ENCODE measurements at regions of chr10 and their contacts with region 1.

Region 1: DNA sequence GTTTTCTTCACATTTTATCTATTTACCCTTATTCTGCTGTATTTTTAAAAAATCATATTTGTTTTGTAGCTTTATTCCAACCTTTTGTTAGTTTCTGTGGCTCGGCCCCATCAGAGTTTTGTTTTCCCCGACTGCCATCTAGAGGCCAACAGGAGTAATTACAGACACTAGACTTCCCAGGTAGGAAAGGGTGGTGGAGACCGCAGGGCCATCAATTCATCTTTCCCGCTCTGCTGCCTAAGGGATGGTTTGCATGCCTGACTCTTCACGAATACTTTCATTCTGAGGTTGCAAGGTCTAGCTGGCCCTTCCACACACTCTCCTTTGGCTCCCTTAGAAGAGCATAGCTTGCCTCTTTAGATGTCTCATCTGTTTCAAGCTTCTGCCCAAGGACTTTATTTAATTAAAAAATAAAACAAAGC is 38.3 kb downstream of the LYZL2 start:
- DNase-seq: peak in 7 of 9 donors; percentile 23 to 61 (median 48)
- ATAC-seq: peak; percentile 80
- H3K4me3 ChIP-seq: no peak overlapping the region
- H3K4me3 Mint-ChIP-seq: no peak overlapping the region
- H3K27ac ChIP-seq: no peak overlapping the region
- H3K27ac Mint-ChIP-seq: no peak overlapping the region
- H3K4me1 ChIP-seq: no peaks in the 10 kb centered on the region
- H3K4me1 Mint-ChIP-seq: peaks cover 0 to 3% (median 0%) of the 10 kb centered on the region in 7 donors
- H3K27me3 ChIP-seq: no peaks in the 10 kb centered on the region
- H3K27me3 Mint-ChIP-seq: peaks cover 0 to 26% (median 13%) of the 10 kb centered on the region in 5 donors

Region 2: GRCh38 chr10:29386342-29386999 is 1204.8 kb before region 1 on chr10:
- CTCF ChIA-PET with region 1: interaction called, 7 read pairs
- POLR2A ChIA-PET with region 1: no interaction called
- intact Hi-C with region 1: loop called in 1 of 2 experiments (anchors 10 kb)
- DNase-seq: peak in 6 of 9 donors; percentile 5 to 40 (median 35)
- ATAC-seq: peak; percentile 67
- H3K4me3 ChIP-seq: no peak overlapping the region
- H3K4me3 Mint-ChIP-seq: no peak overlapping the region
- H3K27ac ChIP-seq: no peak overlapping the region
- H3K27ac Mint-ChIP-seq: no peak overlapping the region
- H3K4me1 ChIP-seq: no peaks in the 10 kb centered on the region
- H3K4me1 Mint-ChIP-seq: peaks cover 0 to 6% (median 0%) of the 10 kb centered on the region in 7 donors
- H3K27me3 ChIP-seq: peaks cover 0 to 3% of the 10 kb centered on the region in 2 donors
- H3K27me3 Mint-ChIP-seq: peaks cover 0 to 13% (median 5%) of the 10 kb centered on the region in 5 donors

Region 3: DNA sequence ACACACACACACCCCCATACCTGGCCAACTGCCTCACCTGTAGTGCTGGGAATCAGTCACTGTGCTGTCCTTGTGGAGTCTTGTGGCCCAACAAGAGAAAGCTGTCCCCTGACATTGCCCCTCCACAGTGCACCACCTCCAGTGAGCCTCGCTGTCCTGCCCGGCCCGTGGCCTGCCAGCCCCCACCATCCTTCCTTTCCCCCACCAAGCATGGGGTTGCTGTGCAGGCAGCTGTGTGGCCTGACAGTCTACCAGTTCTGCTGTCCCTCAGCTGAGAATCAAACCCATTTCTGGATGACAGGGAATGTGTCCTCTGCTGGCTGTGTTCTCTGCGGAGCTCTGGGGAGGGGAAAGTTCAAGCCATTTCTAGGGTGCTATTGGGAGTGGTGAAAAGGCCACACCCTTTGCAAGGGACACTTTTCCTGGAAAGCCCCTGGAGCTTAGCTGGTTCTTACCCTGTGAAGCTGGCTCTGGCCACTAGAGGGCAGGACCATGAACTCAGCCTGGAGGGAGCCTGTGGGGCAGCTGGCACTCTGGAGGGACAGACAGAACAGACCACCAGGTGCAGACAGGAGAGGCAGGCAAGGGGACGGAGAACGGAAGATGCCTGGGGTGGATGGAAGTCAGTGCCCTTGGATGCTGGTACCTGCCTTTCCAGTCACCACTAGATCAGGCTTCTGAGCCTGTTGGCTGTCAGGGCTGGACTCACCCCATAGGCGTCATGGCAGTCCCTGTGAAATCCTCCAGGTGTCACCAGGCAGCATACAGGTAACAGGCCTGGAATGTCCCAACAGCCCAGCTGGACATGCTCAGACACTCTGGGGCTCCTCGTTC is 231.7 kb before region 1 on chr10:
- CTCF ChIA-PET with region 1: interaction called, 6 read pairs
- POLR2A ChIA-PET with region 1: no interaction called
- intact Hi-C with region 1: loop called (anchors 1 kb)
- DNase-seq: peak; percentile 15 to 68 (median 34)
- ATAC-seq: peak; percentile 90
- H3K4me3 ChIP-seq: no peak overlapping the region
- H3K4me3 Mint-ChIP-seq: no peak overlapping the region
- H3K27ac ChIP-seq: no peak overlapping the region
- H3K27ac Mint-ChIP-seq: peak overlapping the region in 1 of 9 donors; percentile 15
- H3K4me1 ChIP-seq: no peaks in the 10 kb centered on the region
- H3K4me1 Mint-ChIP-seq: peaks cover 0 to 6% (median 4%) of the 10 kb centered on the region in 7 donors
- H3K27me3 ChIP-seq: no peaks in the 10 kb centered on the region
- H3K27me3 Mint-ChIP-seq: peaks cover 0 to 20% (median 4%) of the 10 kb centered on the region in 5 donors

Region 4: GRCh38 chr10:30392564-30392990 is 198.7 kb before region 1 on chr10:
- CTCF ChIA-PET with region 1: interaction called, 83 read pairs
- POLR2A ChIA-PET with region 1: interaction called, 4 read pairs
- intact Hi-C with region 1: loop called (anchors 1 kb)
- DNase-seq: peak; percentile 45 to 80 (median 66)
- ATAC-seq: peak; percentile 99
- H3K4me3 ChIP-seq: no peak overlapping the region
- H3K4me3 Mint-ChIP-seq: peak overlapping the region in 2 of 10 donors; percentile 18 to 57
- H3K27ac ChIP-seq: no peak overlapping the region
- H3K27ac Mint-ChIP-seq: peak overlapping the region in 1 of 9 donors; percentile 47
- H3K4me1 ChIP-seq: peaks cover 0 to 5% of the 10 kb centered on the region in 2 donors
- H3K4me1 Mint-ChIP-seq: peaks cover 0 to 4% (median 3%) of the 10 kb centered on the region in 7 donors
- H3K27me3 ChIP-seq: no peaks in the 10 kb centered on the region
- H3K27me3 Mint-ChIP-seq: peaks cover 0 to 42% (median 6%) of the 10 kb centered on the region in 5 donors

Region 5: GRCh38 chr10:30534465-30535144 is 56.7 kb before region 1 on chr10:
- CTCF ChIA-PET with region 1: interaction called, 5 read pairs
- POLR2A ChIA-PET with region 1: no interaction called
- intact Hi-C with region 1: loop called (anchors 1 kb)
- DNase-seq: peak; percentile 36 to 79 (median 72)
- ATAC-seq: peak; percentile 69
- H3K4me3 ChIP-seq: no peak overlapping the region
- H3K4me3 Mint-ChIP-seq: no peak overlapping the region
- H3K27ac ChIP-seq: no peak overlapping the region
- H3K27ac Mint-ChIP-seq: peak overlapping the region in 2 of 9 donors; percentile 2 to 23
- H3K4me1 ChIP-seq: peaks cover 7 to 21% of the 10 kb centered on the region in 2 donors
- H3K4me1 Mint-ChIP-seq: peaks cover 8 to 39% (median 12%) of the 10 kb centered on the region in 7 donors
- H3K27me3 ChIP-seq: no peaks in the 10 kb centered on the region
- H3K27me3 Mint-ChIP-seq: peaks cover 0 to 16% (median 0%) of the 10 kb centered on the region in 5 donors